ENCODE measurements at regions of chr19 and their contacts with region 1.

Region 1: GRCh38 chr19:58154679-58155648 is 4.4 kb upstream of the ZNF329 start:
- DNase-seq: peak; percentile 94 to 100 (median 99)
- ATAC-seq: peak; percentile 85
- H3K4me3 ChIP-seq: peak overlapping the region; percentile 69 to 99
- H3K4me3 Mint-ChIP-seq: peak overlapping the region; percentile 87
- H3K27ac ChIP-seq: peak overlapping the region; percentile 76 to 94
- H3K27ac Mint-ChIP-seq: peak overlapping the region; percentile 82
- H3K4me1 ChIP-seq: peaks cover 17% of the 10 kb centered on the region
- H3K4me1 Mint-ChIP-seq: peaks cover 25% of the 10 kb centered on the region
- H3K27me3 ChIP-seq: no peaks in the 10 kb centered on the region
- H3K27me3 Mint-ChIP-seq: no peaks in the 10 kb centered on the region
- CTCF ChIP-seq: peak; percentile 98

Region 2: DNA sequence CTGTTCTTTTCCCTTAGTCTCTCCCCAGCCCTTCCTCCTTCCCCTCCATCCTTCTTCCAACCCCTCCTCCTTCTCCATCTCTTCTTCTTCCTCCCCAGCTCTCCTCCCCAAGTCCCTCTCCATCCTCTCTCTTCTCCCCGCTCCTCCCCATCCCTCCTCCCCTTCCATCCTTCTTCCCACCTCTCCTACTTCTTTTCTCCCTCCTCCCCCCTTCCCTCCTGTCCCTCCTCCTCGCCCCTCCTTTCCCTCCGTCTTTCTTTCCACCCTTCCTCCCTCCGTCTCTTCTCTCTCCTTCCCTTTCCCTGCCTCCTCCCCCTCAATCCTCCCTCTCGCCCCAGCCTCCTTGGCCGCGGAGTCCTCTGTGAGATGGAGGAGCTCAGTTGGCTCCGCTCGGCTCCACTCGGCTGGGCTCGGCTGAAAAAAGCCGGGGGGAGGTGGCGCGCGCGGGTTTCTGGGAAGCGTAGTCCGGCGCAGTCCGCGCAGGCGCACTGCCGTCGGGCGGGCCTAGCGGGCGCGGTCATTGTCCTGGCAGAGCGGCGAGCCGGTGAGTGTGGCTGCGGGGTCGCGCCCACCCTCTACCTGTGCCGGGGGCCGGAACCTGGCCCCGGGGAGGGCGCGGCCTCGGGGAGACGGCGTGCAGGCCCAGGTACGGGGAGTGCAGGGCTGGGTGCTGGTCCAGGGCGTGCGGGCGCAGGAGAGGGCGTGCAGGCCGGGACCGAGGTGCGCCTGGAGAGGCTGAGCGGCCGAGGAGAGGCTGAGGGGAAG is 1560.0 kb before region 1 on chr19 and contains the start of gene ZNF71:
- CTCF ChIA-PET with region 1: no interaction called
- POLR2A ChIA-PET with region 1: no interaction called
- intact Hi-C with region 1: loop called in 1 of 2 experiments (anchors 10 kb)
- DNase-seq: peak; percentile 72 to 91 (median 87)
- ATAC-seq: peak; percentile 96
- H3K4me3 ChIP-seq: peak within 1 kb of the TSS; percentile 45 to 72
- H3K4me3 Mint-ChIP-seq: peak within 1 kb of the TSS; percentile 91
- H3K27ac ChIP-seq: peak within 1 kb of the TSS; percentile 58 to 65
- H3K27ac Mint-ChIP-seq: peak within 1 kb of the TSS; percentile 91
- H3K4me1 ChIP-seq: peaks cover 18% of the 10 kb centered on the region
- H3K4me1 Mint-ChIP-seq: peaks cover 19% of the 10 kb centered on the region
- H3K27me3 ChIP-seq: no peaks in the 10 kb centered on the region
- H3K27me3 Mint-ChIP-seq: no peaks in the 10 kb centered on the region
- CTCF ChIP-seq: no peak
- total RNA-seq, gene ZNF71: 2.4 to 2.8 TPM

Region 3: GRCh38 chr19:57435062-57435978 is 719.6 kb before region 1 on chr19 and contains the start of gene ZNF749:
- CTCF ChIA-PET with region 1: no interaction called
- POLR2A ChIA-PET with region 1: no interaction called
- intact Hi-C with region 1: loop called (anchors 1 kb)
- DNase-seq: peak; percentile 93 to 100 (median 96)
- ATAC-seq: peak; percentile 99
- H3K4me3 ChIP-seq: peak within 1 kb of the TSS; percentile 57 to 86
- H3K4me3 Mint-ChIP-seq: peak within 1 kb of the TSS; percentile 99
- H3K27ac ChIP-seq: peak within 1 kb of the TSS; percentile 52 to 80
- H3K27ac Mint-ChIP-seq: peak within 1 kb of the TSS; percentile 97
- H3K4me1 ChIP-seq: peaks cover 11% of the 10 kb centered on the region
- H3K4me1 Mint-ChIP-seq: peaks cover 34% of the 10 kb centered on the region
- H3K27me3 ChIP-seq: no peaks in the 10 kb centered on the region
- H3K27me3 Mint-ChIP-seq: no peaks in the 10 kb centered on the region
- CTCF ChIP-seq: no peak
- total RNA-seq, gene ZNF749: 5.6 to 9.1 TPM

Region 4: DNA sequence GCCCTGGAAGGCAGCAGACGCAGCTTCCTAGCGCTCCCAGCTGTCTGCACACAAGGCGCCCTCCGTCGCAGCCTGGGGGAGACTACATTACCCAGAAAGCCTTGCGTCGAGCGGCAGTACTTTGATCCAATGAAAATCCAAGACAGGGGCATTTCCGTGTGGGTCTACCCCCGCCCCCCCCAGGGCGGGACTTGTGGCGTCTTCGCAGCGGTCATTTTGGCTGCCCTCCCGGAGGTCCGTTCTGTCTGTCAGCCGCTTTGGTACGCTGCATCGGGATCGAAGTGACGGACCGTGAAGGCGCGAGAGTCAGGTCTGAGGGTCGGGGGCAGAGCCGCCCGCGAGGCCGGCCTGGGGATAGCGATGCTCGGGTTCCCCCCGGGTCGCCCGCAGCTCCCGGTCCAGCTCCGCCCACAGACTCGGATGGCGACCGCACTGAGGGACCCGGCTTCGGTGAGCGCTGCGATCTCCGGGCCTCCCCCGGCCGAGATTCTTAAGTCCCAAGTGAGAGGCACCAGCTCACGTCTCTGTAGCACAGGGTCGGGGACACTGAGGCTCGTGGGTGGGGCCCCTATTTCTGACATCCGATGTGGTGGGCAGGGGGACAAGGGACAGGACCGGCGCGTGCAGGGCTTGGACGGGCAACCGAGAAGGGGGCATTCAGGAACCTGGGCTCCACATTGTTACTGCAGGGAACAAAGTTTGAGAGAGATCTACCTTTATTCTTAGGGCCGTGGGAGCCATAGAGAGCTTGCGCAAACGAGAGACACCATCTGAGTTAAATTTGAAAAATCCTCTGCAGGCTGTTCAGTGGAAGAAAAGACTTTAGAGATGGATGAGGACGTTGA is 521.8 kb before region 1 on chr19 and contains the start of gene ZNF211:
- CTCF ChIA-PET with region 1: no interaction called
- POLR2A ChIA-PET with region 1: no interaction called
- intact Hi-C with region 1: loop called (anchors 1 kb)
- DNase-seq: peak; percentile 70 to 95 (median 89)
- ATAC-seq: peak; percentile 100
- H3K4me3 ChIP-seq: peak within 1 kb of the TSS; percentile 81 to 82
- H3K4me3 Mint-ChIP-seq: peak within 1 kb of the TSS; percentile 96
- H3K27ac ChIP-seq: peak within 1 kb of the TSS; percentile 60 to 78
- H3K27ac Mint-ChIP-seq: peak within 1 kb of the TSS; percentile 94
- H3K4me1 ChIP-seq: peaks cover 13% of the 10 kb centered on the region
- H3K4me1 Mint-ChIP-seq: peaks cover 29% of the 10 kb centered on the region
- H3K27me3 ChIP-seq: no peaks in the 10 kb centered on the region
- H3K27me3 Mint-ChIP-seq: no peaks in the 10 kb centered on the region
- CTCF ChIP-seq: no peak
- total RNA-seq, gene ZNF211: 34.4 to 35.5 TPM

Region 5: DNA sequence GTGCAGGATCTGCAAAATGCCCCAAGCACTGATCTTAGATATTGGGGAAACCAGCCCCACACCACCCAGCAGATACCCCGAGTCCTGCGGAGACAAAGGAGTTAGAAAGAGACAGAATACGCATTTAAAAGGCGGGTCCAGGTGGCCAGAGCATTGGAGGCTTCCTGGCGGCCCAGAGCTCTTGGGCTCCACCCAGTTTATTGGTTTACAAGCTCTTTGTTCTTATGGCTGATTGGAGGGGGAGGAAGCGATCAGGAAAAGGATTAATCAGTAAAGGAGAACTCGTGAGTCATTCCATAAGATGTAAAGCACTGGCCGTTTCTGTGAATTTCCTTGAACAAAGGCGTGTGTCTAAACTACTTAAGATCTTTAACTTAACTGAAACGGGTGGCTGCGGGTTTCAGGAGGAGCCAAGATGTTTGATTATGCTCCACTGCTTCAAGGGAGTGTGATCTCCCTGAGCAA is 304.4 kb before region 1 on chr19:
- CTCF ChIA-PET with region 1: no interaction called
- POLR2A ChIA-PET with region 1: no interaction called
- intact Hi-C with region 1: loop called in 1 of 2 experiments (anchors 1 kb)
- DNase-seq: peak in 2 of 9 experiments; percentile 8 to 12
- ATAC-seq: no peak
- H3K4me3 ChIP-seq: peak overlapping the region; percentile 68 to 85
- H3K4me3 Mint-ChIP-seq: peak overlapping the region; percentile 93
- H3K27ac ChIP-seq: peak overlapping the region; percentile 78 to 82
- H3K27ac Mint-ChIP-seq: peak overlapping the region; percentile 96
- H3K4me1 ChIP-seq: peaks cover 16% of the 10 kb centered on the region
- H3K4me1 Mint-ChIP-seq: peaks cover 33% of the 10 kb centered on the region
- H3K27me3 ChIP-seq: no peaks in the 10 kb centered on the region
- H3K27me3 Mint-ChIP-seq: no peaks in the 10 kb centered on the region
- CTCF ChIP-seq: no peak

Region 6: DNA sequence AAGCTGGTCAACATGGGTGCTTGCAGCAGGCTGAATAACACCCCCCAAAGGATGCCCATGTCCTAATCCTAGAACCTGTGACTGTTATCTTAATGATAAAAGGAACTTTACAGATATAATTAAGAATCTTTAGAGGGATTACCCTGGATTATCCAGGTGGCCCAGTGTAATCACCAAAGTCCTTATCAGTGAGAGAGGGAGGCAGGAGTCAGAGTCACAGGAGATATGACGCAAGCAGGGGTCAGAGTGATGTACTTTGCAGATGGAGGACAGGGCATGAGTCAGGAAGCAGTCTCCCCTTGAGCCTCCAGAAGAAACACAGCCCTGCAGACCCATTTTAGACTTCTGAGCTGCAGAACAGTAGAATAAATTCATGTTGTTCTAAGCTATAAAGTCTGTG is 162.1 kb before region 1 on chr19:
- CTCF ChIA-PET with region 1: no interaction called
- POLR2A ChIA-PET with region 1: no interaction called
- intact Hi-C with region 1: no loop called
- DNase-seq: no peak
- ATAC-seq: no peak
- H3K4me3 ChIP-seq: no peak overlapping the region
- H3K4me3 Mint-ChIP-seq: no peak overlapping the region
- H3K27ac ChIP-seq: no peak overlapping the region
- H3K27ac Mint-ChIP-seq: no peak overlapping the region
- H3K4me1 ChIP-seq: no peaks in the 10 kb centered on the region
- H3K4me1 Mint-ChIP-seq: no peaks in the 10 kb centered on the region
- H3K27me3 ChIP-seq: no peaks in the 10 kb centered on the region
- H3K27me3 Mint-ChIP-seq: no peaks in the 10 kb centered on the region
- CTCF ChIP-seq: no peak

Region 7: GRCh38 chr19:58097781-58098681 is 56.9 kb before region 1 on chr19 and contains the start of gene ZSCAN18:
- CTCF ChIA-PET with region 1: no interaction called
- POLR2A ChIA-PET with region 1: no interaction called
- intact Hi-C with region 1: loop called (anchors 1 kb)
- DNase-seq: peak; percentile 90 to 99 (median 97)
- ATAC-seq: peak; percentile 95
- H3K4me3 ChIP-seq: peak within 1 kb of the TSS; percentile 90 to 98
- H3K4me3 Mint-ChIP-seq: peak within 1 kb of the TSS; percentile 88
- H3K27ac ChIP-seq: peak within 1 kb of the TSS; percentile 97 to 100
- H3K27ac Mint-ChIP-seq: peak within 1 kb of the TSS; percentile 100
- H3K4me1 ChIP-seq: peaks cover 12% of the 10 kb centered on the region
- H3K4me1 Mint-ChIP-seq: peaks cover 18% of the 10 kb centered on the region
- H3K27me3 ChIP-seq: no peaks in the 10 kb centered on the region
- H3K27me3 Mint-ChIP-seq: no peaks in the 10 kb centered on the region
- CTCF ChIP-seq: no peak
- total RNA-seq, gene ZSCAN18: 57.6 to 61.0 TPM

Region 8: DNA sequence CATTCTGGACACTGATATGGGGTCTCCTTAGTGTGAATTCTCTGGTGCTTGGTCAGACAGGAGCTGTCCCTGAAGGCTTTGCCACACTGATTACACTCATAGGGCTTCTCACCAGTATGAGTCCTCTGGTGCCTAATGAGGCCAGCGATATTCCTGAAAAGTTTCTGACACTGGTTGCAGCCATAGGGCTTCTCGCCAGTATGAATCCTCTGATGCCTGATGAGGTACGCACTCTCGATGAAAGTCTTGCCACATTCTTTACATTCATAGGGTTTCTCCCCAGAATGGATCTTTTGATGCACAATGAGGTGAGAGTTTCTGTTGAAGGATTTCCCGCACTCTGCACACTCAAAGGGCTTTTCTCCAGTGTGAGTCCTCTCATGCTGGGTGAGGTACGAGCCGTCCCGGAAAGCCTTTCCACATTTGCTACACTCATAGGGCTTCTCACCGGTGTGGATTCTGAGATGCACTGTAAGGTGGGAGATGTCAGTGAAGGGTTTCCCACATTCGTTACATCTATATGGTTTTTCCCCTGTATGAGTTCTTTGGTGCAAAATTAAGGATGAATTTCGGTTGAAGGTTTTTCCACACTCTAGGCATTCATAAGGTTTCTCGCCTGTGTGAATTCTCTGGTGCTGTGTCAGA is 26.8 kb before region 1 on chr19:
- CTCF ChIA-PET with region 1: no interaction called
- POLR2A ChIA-PET with region 1: no interaction called
- intact Hi-C with region 1: no loop called
- DNase-seq: no peak
- ATAC-seq: no peak
- H3K4me3 ChIP-seq: peak overlapping the region in 1 of 2 experiments; percentile 16
- H3K4me3 Mint-ChIP-seq: no peak overlapping the region
- H3K27ac ChIP-seq: no peak overlapping the region
- H3K27ac Mint-ChIP-seq: no peak overlapping the region
- H3K4me1 ChIP-seq: no peaks in the 10 kb centered on the region
- H3K4me1 Mint-ChIP-seq: no peaks in the 10 kb centered on the region
- H3K27me3 ChIP-seq: no peaks in the 10 kb centered on the region
- H3K27me3 Mint-ChIP-seq: no peaks in the 10 kb centered on the region
- CTCF ChIP-seq: no peak